ENCODE measurements at regions of chr7 and their contacts with region 1.

Region 1: GRCh38 chr7:130263130-130263529 is 3.5 kb upstream of the CPA2 start:
- DNase-seq: no peak
- H3K4me3 ChIP-seq: no peak overlapping the region
- H3K27ac ChIP-seq: no peak overlapping the region
- H3K27me3 ChIP-seq: no peaks in the 10 kb centered on the region
- CTCF ChIP-seq: no peak

Region 2: DNA sequence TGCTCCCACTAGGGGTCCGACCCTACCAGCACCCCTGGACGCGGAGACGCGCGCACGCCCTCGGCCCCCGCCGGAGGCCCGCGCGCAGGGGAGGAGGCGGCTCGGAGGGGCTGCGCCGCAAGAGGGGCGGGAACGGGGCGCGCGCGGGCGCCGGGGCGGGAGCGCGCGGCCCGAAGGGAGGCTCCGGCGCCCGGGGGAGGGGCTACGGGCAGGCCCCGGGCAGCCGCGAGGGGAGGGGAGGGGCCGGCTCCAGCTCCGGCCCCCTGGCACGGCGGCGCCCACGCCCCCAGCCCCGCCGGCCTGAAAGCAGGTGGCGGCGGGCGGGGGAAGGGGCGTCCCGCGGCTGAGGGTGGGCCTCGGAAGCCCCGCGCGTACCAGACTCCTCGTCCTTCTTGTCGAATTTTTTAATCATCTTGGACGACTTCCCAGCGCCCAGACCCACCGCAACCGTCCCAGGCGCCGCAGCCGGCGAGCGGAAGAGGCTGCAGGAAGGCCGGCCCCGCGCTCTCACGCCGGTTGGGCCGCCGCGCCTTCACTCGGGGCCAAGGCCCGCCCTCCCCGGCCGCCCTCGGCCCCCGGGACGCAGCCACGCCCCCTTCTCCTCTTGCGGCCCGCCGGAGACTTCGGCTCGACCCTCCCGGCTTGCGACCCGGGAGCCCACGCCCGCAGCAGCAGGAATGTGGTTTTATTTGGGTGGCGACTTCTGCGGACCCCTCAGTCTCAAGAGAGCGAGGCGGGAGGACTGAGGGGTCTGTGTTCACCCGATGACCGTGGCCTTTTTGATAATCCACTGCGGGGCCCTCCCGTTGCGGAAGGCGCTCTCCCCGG is 405.3 kb after region 1 on chr7 and contains the start of gene COPG2:
- intact Hi-C with region 1: loop called in 1 of 2 experiments (anchors 10 kb)
- DNase-seq: peak; percentile 58 to 91 (median 77)
- H3K4me3 ChIP-seq: peak within 1 kb of the TSS; percentile 50 to 96 (median 84)
- H3K27ac ChIP-seq: peak within 1 kb of the TSS in 58 of 59 donors; percentile 17 to 95 (median 86)
- H3K27me3 ChIP-seq: no peaks in the 10 kb centered on the region
- CTCF ChIP-seq: peak in 23 of 56 donors; percentile 6 to 34 (median 20)
- total RNA-seq, gene COPG2: 14.0 to 31.9 (median 23.5) TPM